PC-9 (cell line): ENCODE measurements at regions of chr7 and their contacts with region 1.

Region 1: DNA sequence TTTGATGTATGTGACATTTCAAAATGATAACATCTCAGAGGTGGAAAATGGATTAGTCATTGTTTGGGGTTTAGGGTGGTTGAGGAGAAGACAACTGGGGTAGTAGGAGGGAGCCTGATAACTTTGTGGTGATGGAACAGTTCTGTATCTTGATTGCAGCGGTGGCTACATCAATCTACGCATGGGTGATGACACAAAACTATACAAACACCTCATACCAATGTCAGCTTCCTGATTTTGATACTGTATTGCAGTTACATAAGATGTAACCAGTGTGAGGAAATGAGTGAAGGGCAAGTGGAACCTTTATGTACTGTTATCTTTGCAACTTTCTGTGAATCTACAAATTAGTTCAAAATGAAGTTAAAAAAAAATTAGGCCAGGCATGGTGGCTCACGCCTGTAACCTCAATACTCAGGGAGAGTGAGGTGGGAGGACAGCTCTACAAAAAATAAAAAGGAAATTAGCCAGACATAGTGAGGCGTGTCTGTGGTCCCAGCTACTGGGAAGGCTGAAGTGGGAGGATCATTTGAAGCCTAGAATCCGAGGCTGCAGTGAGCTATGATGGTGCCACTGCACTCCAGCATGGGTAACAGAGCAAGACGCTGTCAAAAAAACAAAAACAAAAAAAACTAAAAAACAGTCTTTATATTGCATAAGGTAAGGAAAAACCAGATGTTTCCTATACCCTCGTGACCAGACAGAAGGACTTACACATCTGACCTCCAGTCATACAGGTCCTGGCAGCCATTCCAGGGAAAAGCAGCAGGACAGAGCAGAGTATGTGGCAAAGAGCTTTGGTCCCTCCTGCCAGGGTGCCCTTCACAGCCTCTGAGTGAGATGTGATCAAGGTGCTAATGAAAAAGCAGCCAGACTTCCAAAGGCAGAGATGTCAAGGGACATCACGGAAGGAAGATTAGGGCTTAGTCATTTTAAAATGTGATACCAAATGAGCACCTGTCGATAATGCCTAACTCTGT is 50.8 kb downstream of the CYTH3 start:
- DNase-seq: peak in 1 of 2 experiments; percentile 15
- H3K4me3 ChIP-seq: no peak overlapping the region
- H3K27ac ChIP-seq: no peak overlapping the region
- H3K4me1 ChIP-seq: peaks cover 18% of the 10 kb centered on the region
- H3K27me3 ChIP-seq: no peaks in the 10 kb centered on the region
- CTCF ChIP-seq: no peak

Region 2: DNA sequence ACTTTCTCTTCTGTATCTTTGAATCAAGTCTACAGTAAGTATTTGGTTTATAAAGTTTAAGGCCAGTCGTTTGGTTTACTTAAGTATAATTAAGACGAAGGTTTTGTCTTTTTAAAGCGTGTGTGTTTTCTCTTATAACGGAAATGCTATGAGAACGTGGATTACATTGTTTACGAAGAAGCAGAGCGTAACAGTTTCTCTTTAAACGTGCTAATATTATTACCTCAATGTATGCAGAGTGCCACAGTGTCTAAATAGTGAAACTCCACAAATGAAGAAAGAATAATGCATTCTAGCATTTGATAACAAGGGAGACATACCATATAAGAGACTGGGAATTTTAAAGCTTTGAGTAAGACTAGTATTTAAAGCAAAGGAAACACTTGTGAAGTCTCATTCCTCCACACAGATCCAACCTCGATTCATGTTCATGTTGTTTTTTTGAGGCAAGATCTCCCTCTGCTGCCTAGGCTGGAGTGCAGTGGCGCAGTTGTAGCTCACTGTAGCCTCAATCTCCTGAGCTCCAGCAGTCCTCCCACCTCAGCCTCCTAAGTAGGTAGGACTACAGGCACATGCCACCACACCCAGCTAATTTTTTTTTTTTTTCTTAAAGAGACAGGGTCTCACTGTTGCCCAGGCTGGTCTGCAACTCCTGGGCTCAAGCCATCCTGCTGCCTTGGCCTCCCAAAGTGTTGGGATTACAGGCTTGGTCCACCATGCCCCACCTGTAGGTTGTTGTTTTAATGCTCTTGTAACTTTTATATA is 115.3 kb before region 1 on chr7:
- CTCF ChIA-PET with region 1: no interaction called
- POLR2A ChIA-PET with region 1: interaction called, 17 read pairs
- intact Hi-C with region 1: no loop called
- DNase-seq: peak in 1 of 2 experiments; percentile 22
- H3K4me3 ChIP-seq: peak overlapping the region; percentile 74
- H3K27ac ChIP-seq: peak overlapping the region; percentile 27
- H3K4me1 ChIP-seq: peaks cover 13% of the 10 kb centered on the region
- H3K27me3 ChIP-seq: no peaks in the 10 kb centered on the region
- CTCF ChIP-seq: no peak; the same call in 1 of the 2 replicates

Region 3: DNA sequence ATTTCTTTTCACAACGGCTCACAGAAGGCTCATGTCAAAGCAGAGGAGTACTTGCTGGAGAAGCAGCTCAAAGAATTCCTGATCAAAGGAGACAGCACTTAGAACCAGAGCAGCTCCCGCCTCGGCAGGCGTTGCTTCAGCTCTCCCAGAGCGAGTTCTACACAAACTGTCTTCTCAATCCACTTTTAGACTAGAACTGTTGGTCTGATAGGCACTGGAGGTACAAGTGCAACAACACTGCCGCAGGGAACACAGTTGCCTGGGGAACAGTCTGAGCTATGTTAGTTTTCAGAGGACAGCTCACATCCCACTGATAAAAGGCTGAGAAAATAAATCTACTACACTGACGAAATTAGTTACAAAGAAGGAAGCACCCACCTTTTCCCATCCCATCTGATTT is 15.4 kb after region 1 on chr7:
- CTCF ChIA-PET with region 1: no interaction called
- POLR2A ChIA-PET with region 1: interaction called, 25 read pairs
- intact Hi-C with region 1: no loop called
- DNase-seq: no peak
- H3K4me3 ChIP-seq: no peak overlapping the region
- H3K27ac ChIP-seq: no peak overlapping the region
- H3K4me1 ChIP-seq: no peaks in the 10 kb centered on the region
- H3K27me3 ChIP-seq: no peaks in the 10 kb centered on the region
- CTCF ChIP-seq: no peak

Region 4: DNA sequence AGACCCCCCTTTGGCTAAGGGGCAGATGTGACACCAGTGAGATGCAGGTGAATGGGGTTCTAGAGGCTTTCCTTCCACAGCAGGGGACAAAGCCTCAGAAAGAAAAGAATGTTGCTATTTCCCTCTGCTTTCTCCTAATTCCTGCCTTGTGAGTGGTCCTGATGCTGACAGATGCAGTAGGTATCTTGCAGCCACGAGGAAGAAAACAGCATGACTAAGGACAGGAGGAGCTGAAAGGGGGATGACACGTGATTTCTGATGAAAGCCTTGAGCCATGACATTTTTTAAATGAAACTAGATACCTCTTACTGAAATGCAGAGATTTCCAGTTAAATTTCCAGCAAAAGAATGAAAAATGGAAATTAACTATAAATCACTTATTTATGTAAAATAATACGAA is 1053.2 kb after region 1 on chr7:
- CTCF ChIA-PET with region 1: no interaction called
- POLR2A ChIA-PET with region 1: no interaction called
- intact Hi-C with region 1: no loop called
- DNase-seq: no peak
- H3K4me3 ChIP-seq: no peak overlapping the region
- H3K27ac ChIP-seq: no peak overlapping the region
- H3K4me1 ChIP-seq: no peaks in the 10 kb centered on the region; the same call in 1 of the 2 replicates
- H3K27me3 ChIP-seq: no peaks in the 10 kb centered on the region
- CTCF ChIP-seq: no peak